ENCODE measurements at regions of chr5 and their contacts with region 1.

Region 1: DNA sequence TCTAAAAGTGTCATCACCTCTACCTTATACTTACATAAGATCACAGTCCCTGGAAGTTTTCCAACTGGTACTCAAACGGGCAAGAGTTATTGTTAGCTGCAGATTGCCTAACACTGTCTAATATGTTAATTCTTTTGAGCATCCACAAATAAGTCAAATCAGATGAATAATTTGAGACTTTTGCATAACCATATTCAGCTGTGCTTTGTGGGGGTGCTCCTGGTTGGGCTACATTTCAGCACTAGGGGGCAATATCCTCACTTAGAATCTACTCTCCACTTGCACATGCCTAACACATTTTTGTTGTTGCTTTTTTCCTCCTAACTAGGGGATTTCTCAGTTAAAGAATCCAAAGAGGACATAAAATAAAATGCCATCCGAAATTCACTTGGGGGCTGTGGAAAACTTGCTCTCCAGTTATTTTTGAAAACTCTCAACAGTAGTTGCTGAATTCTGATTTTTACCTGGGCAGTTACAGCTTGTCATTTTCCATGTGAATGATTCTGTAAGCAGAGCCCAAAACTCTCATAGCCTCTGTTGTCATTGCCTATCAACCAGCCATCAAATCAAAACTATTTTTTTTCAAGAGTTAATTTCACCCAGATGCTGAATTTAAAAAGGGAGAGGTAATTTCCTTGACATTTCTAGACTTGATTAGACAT is 71.5 kb downstream of the TRIM36 start:
- DNase-seq: no peak
- ATAC-seq: no peak

Region 2: GRCh38 chr5:115109840-115110239 is 11.7 kb after region 1 on chr5:
- intact Hi-C with region 1: loop called (anchors 2 kb)
- DNase-seq: no peak
- ATAC-seq: no peak

Region 3: GRCh38 chr5:115214541-115214940 is 116.4 kb after region 1 on chr5:
- intact Hi-C with region 1: no loop called
- DNase-seq: no peak
- ATAC-seq: no peak

Region 4: GRCh38 chr5:115246361-115246991 is 148.3 kb after region 1 on chr5:
- intact Hi-C with region 1: loop called (anchors 2 kb)
- DNase-seq: no peak
- ATAC-seq: no peak

Measured in Right ventricle myocardium inferior (tissue), 1 donor.